ENCODE measurements at regions of chr4 and their contacts with region 1.

Region 1: DNA sequence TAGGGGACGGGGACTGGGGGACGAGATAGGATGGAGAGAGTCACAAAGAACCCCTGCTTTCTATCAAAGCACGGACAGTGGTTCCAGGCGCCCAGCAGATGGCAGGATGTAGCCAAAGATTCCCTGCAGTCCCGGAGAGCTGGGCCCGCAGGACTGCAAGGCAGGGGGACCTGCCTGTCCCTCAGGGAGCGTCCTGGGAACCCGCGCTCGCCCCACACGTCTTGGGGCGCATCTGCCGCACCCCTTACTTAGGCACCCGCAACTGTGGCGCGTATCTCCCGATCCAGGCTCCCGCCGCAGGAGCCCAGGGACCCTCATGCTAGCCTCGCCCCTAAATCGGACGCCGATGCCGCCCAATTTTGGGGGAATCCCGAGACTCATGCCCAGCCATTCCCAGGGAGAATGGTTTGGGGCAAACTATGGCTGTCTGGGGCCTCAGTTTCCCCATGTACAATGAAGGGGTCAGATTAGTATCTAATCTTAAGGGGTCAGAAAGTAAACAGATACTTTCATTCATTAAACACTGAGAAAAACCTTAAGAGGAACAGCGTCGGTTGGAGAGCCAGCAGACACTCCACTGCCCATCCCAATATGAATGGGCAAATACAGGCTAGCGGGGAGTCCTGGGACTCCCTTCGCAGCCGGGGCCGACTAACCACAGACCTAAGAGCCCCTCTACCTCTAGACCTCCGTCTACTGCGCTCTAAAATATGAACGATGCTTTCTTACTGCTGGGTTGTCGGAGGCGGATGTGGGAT is 581 bp upstream of the STK32B start:
- DNase-seq: peak; percentile 76 to 87 (median 83)
- ATAC-seq: peak; percentile 85 to 93
- H3K4me3 ChIP-seq: peak overlapping the region; percentile 43
- H3K27ac ChIP-seq: no peak overlapping the region
- H3K4me1 ChIP-seq: no peaks in the 10 kb centered on the region
- H3K27me3 ChIP-seq: no peaks in the 10 kb centered on the region

Region 2: DNA sequence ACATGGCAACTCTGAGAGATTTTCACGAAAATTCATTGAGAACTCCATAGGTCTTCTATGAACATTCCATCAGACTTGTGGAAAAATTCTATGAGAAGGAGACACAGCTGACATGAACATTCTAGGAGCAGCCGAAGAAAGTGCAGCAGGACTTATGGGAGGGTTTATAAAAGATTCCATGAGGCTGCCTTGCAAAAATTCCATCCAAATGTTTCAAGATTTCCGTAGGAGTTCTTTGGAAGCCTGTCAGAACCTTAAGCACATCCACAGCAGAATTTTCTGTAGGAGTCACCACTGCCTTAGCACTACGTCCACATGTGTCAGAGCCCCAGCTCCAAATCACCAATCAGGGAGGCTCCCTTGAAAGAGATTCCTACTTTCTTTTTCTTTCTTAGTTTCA is 258.2 kb before region 1 on chr4:
- intact Hi-C with region 1: no loop called
- DNase-seq: no peak
- ATAC-seq: no peak
- H3K4me3 ChIP-seq: no peak overlapping the region
- H3K27ac ChIP-seq: no peak overlapping the region
- H3K4me1 ChIP-seq: no peaks in the 10 kb centered on the region
- H3K27me3 ChIP-seq: no peaks in the 10 kb centered on the region

Region 3: DNA sequence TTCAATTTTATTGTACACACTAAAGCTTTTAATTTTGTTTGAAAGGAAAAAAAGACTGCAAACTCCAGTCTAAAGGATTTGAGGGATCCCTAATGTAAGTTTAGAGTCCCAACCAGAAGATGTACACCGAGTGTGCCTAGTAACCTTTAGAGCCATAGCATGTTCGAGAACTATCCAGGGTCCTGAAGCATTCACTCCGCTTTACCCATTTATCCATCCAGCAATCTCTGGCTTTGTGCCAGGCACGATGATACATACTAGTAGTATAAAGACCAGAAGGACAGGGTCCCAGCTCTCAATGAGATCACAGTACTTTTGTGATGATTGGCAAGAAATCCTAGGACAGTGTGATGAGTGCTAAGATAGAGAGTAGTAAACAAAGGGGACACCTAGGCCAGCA is 169.3 kb after region 1 on chr4:
- intact Hi-C with region 1: no loop called
- DNase-seq: no peak
- ATAC-seq: no peak
- H3K4me3 ChIP-seq: no peak overlapping the region
- H3K27ac ChIP-seq: no peak overlapping the region
- H3K4me1 ChIP-seq: no peaks in the 10 kb centered on the region
- H3K27me3 ChIP-seq: no peaks in the 10 kb centered on the region

Region 4: DNA sequence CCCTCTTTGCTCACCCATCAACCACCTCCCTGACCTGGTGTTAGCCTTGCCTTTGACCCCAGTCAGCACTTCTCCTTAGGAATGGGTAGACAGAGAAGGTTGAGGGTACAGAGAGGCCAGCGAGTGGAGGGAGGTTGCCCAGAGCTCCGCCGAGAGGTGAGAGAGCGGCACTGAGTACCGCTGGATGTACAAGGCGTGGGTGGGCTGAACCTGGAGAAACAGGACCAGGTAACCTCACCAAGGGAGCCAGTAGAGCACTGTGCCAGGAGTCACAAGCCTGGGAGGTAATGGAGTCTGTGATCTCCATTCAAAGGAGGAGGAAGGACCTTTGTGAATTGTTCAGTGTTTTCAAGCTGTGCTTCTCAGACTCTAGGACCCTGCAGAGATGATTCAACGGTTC is 401.5 kb after region 1 on chr4:
- intact Hi-C with region 1: loop called in 1 of 4 experiments (anchors 10 kb)
- DNase-seq: no peak
- ATAC-seq: no peak
- H3K4me3 ChIP-seq: no peak overlapping the region
- H3K27ac ChIP-seq: no peak overlapping the region
- H3K4me1 ChIP-seq: no peaks in the 10 kb centered on the region
- H3K27me3 ChIP-seq: no peaks in the 10 kb centered on the region

Region 5: GRCh38 chr4:5460116-5460801 is 409.6 kb after region 1 on chr4:
- intact Hi-C with region 1: loop called in 2 of 4 experiments (anchors 5 to 10 kb)
- DNase-seq: peak in 2 of 3 donors; percentile 27 to 51
- ATAC-seq: peak in 1 of 2 donors; percentile 35
- H3K4me3 ChIP-seq: no peak overlapping the region
- H3K27ac ChIP-seq: no peak overlapping the region
- H3K4me1 ChIP-seq: no peaks in the 10 kb centered on the region
- H3K27me3 ChIP-seq: no peaks in the 10 kb centered on the region

Region 6: GRCh38 chr4:5477613-5478012 is 426.9 kb after region 1 on chr4:
- intact Hi-C with region 1: no loop called
- DNase-seq: no peak
- ATAC-seq: no peak
- H3K4me3 ChIP-seq: no peak overlapping the region
- H3K27ac ChIP-seq: no peak overlapping the region
- H3K4me1 ChIP-seq: no peaks in the 10 kb centered on the region
- H3K27me3 ChIP-seq: no peaks in the 10 kb centered on the region

Region 7: GRCh38 chr4:5812506-5813229 is 762.0 kb after region 1 on chr4:
- intact Hi-C with region 1: loop called in 1 of 4 experiments (anchors 10 kb)
- DNase-seq: no peak
- ATAC-seq: peak; percentile 70 to 75
- H3K4me3 ChIP-seq: no peak overlapping the region
- H3K27ac ChIP-seq: no peak overlapping the region
- H3K4me1 ChIP-seq: no peaks in the 10 kb centered on the region
- H3K27me3 ChIP-seq: no peaks in the 10 kb centered on the region

Measured in right cardiac atrium (tissue), 5 donors.